Colonic mucosa (tissue), 4 donors: ENCODE measurements at regions of chr2 and their contacts with region 1.

Region 1: DNA sequence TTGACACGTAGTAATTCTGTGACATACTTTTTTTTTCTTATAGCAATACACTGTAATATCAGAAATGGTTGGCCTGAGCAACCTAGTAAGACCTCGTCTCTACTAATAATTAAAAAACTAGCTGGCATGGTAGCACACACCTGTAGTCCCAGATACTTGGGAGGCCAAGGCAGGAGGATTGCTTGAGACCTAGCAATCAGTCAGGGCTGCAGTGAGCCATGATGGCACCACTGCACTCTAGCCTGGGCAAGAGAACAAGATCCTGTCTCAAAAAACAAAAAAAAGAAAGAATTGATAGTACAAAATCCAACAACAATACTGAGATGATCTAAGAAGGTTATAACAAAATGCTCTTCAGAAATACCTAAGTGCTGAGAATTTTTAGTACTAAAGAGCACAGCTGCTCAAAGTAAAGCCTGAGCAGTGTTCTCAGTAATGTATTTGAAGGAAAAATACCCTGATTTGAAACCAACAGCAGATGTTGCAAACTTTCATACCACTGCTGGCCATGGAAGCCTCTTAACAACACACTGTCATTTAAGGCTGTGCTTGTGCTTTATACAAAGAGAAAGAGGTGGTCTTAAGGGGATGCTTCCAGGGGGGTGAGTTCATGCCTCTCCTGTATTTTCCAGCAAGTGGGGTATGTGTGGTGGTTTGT is 132.6 kb upstream of the CDCA7 start:
- DNase-seq: no peak
- H3K4me3 ChIP-seq: no peak overlapping the region
- H3K27ac ChIP-seq: no peak overlapping the region
- H3K4me1 ChIP-seq: no peaks in the 10 kb centered on the region
- H3K27me3 ChIP-seq: no peaks in the 10 kb centered on the region
- CTCF ChIP-seq: no peak

Region 2: GRCh38 chr2:172845028-172845630 is 376.9 kb before region 1 on chr2:
- intact Hi-C with region 1: no loop called
- DNase-seq: no peak
- H3K4me3 ChIP-seq: no peak overlapping the region
- H3K27ac ChIP-seq: no peak overlapping the region
- H3K4me1 ChIP-seq: no peaks in the 10 kb centered on the region
- H3K27me3 ChIP-seq: no peaks in the 10 kb centered on the region
- CTCF ChIP-seq: no peak

Region 3: GRCh38 chr2:173354601-173355131 is 132.6 kb after region 1 on chr2 and contains the start of gene CDCA7:
- intact Hi-C with region 1: loop called (anchors 10 kb)
- DNase-seq: peak; percentile 76
- H3K4me3 ChIP-seq: peak within 1 kb of the TSS; percentile 67
- H3K27ac ChIP-seq: peak within 1 kb of the TSS; percentile 59
- H3K4me1 ChIP-seq: no peaks in the 10 kb centered on the region
- H3K27me3 ChIP-seq: no peaks in the 10 kb centered on the region
- CTCF ChIP-seq: no peak
- total RNA-seq, gene CDCA7: 30.0 to 75.8 TPM